AG04449 (cell line): ENCODE measurements at regions of chr6 and their contacts with region 1.

Region 1: GRCh38 chr6:116279260-116280063 is at the start of gene TSPYL1:
- DNase-seq: peak; percentile 59
- H3K4me3 ChIP-seq: peak within 1 kb of the TSS; percentile 90
- CTCF ChIP-seq: no peak

Region 2: DNA sequence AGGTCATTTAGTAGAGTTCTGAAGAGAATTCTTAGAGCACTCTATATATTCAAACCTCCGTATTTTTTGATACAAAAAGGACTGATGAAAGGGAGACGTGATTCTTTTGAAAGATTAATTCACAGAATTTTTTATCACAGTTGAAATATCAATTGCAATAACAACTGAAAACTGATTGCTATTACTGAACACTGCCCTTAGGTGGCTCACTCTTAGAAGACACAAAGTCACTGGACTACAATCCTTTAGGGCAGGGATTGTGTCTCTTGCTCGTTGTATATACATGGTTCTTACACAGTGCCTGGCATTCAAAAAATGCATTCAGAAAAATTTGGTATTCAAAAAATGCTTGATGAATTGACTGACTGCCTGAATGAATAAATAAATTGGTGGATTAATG is 164.6 kb after region 1 on chr6:
- CTCF ChIA-PET with region 1: interaction called, 11 read pairs
- POLR2A ChIA-PET with region 1: no interaction called
- DNase-seq: no peak
- H3K4me3 ChIP-seq: no peak overlapping the region
- CTCF ChIP-seq: peak; percentile 56

Region 3: DNA sequence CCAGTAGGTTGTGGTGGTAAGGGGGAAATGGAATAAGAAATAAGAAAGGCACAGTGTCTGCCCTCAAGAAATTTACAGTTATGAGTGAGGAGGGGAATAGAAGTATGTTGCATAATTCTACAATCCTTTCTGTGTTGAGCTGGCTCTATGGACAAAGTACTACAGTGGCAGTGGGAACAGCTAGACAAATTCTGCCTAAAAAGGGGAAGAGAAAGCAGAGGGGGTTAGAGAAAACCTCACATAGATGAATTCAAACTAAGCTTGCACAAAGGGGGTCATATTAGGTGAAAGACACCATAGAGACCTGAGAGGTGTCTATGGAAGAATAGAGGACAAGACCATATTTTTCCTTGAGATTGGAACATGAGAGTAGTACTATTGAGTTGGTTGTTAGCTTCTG is 839.0 kb after region 1 on chr6:
- CTCF ChIA-PET with region 1: no interaction called
- POLR2A ChIA-PET with region 1: no interaction called
- DNase-seq: no peak
- H3K4me3 ChIP-seq: no peak overlapping the region
- CTCF ChIP-seq: no peak